ENCODE measurements at regions of chr20 and their contacts with region 1.

Region 1: GRCh38 chr20:45963059-45964005 is 8.7 kb downstream of the ZNF335 start:
- DNase-seq: no peak
- H3K4me3 Mint-ChIP-seq: no peak overlapping the region
- H3K27ac Mint-ChIP-seq: no peak overlapping the region
- H3K4me1 Mint-ChIP-seq: peaks cover 8% of the 10 kb centered on the region
- H3K27me3 Mint-ChIP-seq: no peaks in the 10 kb centered on the region

Region 2: DNA sequence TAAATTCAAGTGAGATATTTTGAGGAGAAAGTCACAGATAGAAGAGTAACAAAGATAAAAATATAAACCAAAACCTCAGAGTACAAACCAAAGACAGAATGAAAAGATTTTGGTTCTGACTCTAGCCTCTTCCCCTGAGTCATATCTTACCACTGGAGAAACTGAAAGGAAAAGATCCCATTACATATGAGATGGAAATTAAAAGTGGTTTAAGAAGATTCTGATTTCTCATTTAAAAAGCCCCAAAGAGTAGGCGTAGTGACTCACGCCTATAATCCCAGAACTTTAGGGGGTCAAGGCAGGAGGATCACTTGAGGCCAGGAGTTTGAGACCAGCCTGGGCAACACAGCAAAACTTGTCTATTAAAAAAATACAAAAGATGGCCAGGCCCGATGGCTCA is 210.6 kb before region 1 on chr20:
- CTCF ChIA-PET with region 1: no interaction called
- POLR2A ChIA-PET with region 1: no interaction called
- intact Hi-C with region 1: no loop called
- DNase-seq: peak; percentile 39
- H3K4me3 Mint-ChIP-seq: no peak overlapping the region
- H3K27ac Mint-ChIP-seq: no peak overlapping the region
- H3K4me1 Mint-ChIP-seq: peaks cover 18% of the 10 kb centered on the region
- H3K27me3 Mint-ChIP-seq: peaks cover 26% of the 10 kb centered on the region

Region 3: GRCh38 chr20:45798935-45799642 is 164.2 kb before region 1 on chr20:
- CTCF ChIA-PET with region 1: interaction called, 24 read pairs
- POLR2A ChIA-PET with region 1: no interaction called
- intact Hi-C with region 1: no loop called
- DNase-seq: peak; percentile 74
- H3K4me3 Mint-ChIP-seq: no peak overlapping the region
- H3K27ac Mint-ChIP-seq: peak overlapping the region; percentile 4
- H3K4me1 Mint-ChIP-seq: peaks cover 16% of the 10 kb centered on the region
- H3K27me3 Mint-ChIP-seq: no peaks in the 10 kb centered on the region

Region 4: GRCh38 chr20:45924391-45925261 is 38.7 kb before region 1 on chr20:
- CTCF ChIA-PET with region 1: no interaction called
- POLR2A ChIA-PET with region 1: no interaction called
- intact Hi-C with region 1: no loop called
- DNase-seq: no peak
- H3K4me3 Mint-ChIP-seq: no peak overlapping the region
- H3K27ac Mint-ChIP-seq: no peak overlapping the region
- H3K4me1 Mint-ChIP-seq: peaks cover 3% of the 10 kb centered on the region
- H3K27me3 Mint-ChIP-seq: peaks cover 10% of the 10 kb centered on the region

Region 5: GRCh38 chr20:46051556-46052308 is 88.4 kb after region 1 on chr20:
- CTCF ChIA-PET with region 1: no interaction called
- POLR2A ChIA-PET with region 1: no interaction called
- intact Hi-C with region 1: no loop called
- DNase-seq: no peak
- H3K4me3 Mint-ChIP-seq: no peak overlapping the region
- H3K27ac Mint-ChIP-seq: no peak overlapping the region
- H3K4me1 Mint-ChIP-seq: no peaks in the 10 kb centered on the region
- H3K27me3 Mint-ChIP-seq: peaks cover 7% of the 10 kb centered on the region